ENCODE measurements at regions of chr13 and their contacts with region 1.

Region 1: GRCh38 chr13:108961542-108962125 is 332.2 kb downstream of the MYO16 start:
- DNase-seq: peak; percentile 62
- ATAC-seq: peak; percentile 56
- H3K4me3 ChIP-seq: no peak overlapping the region
- H3K27ac ChIP-seq: no peak overlapping the region
- H3K4me1 ChIP-seq: peaks cover 11% of the 10 kb centered on the region
- H3K27me3 ChIP-seq: no peaks in the 10 kb centered on the region
- CTCF ChIP-seq: peak; percentile 88
- POLR2A ChIP-seq: no peak
- RAD21 ChIP-seq: peak; percentile 94

Region 2: GRCh38 chr13:109569958-109570711 is 608.5 kb after region 1 on chr13:
- CTCF ChIA-PET with region 1: no interaction called
- POLR2A ChIA-PET with region 1: no interaction called
- dilution Hi-C with region 1: no loop called
- in situ Hi-C with region 1: no loop called
- intact Hi-C with region 1: loop called (anchors 5 kb)
- DNase-seq: no peak
- ATAC-seq: no peak
- H3K4me3 ChIP-seq: no peak overlapping the region
- H3K27ac ChIP-seq: no peak overlapping the region
- H3K4me1 ChIP-seq: no peaks in the 10 kb centered on the region
- H3K27me3 ChIP-seq: peaks cover 8% of the 10 kb centered on the region
- CTCF ChIP-seq: no peak
- POLR2A ChIP-seq: no peak
- RAD21 ChIP-seq: no peak

Region 3: GRCh38 chr13:109778102-109778542 is 816.5 kb after region 1 on chr13:
- CTCF ChIA-PET with region 1: interaction called, 4 read pairs
- POLR2A ChIA-PET with region 1: no interaction called
- dilution Hi-C with region 1: no loop called
- in situ Hi-C with region 1: loop called (anchors 10 kb)
- intact Hi-C with region 1: no loop called
- DNase-seq: peak; percentile 39
- ATAC-seq: no peak
- H3K4me3 ChIP-seq: no peak overlapping the region
- H3K27ac ChIP-seq: no peak overlapping the region
- H3K4me1 ChIP-seq: peaks cover 16% of the 10 kb centered on the region
- H3K27me3 ChIP-seq: no peaks in the 10 kb centered on the region
- CTCF ChIP-seq: no peak
- POLR2A ChIP-seq: no peak
- RAD21 ChIP-seq: no peak